ENCODE measurements at regions of chr1 and their contacts with region 1.

Region 1: GRCh38 chr1:150259758-150260669 is 2.4 kb downstream of the CA14 start:
- DNase-seq: peak in 3 of 5 donors; percentile 32 to 68 (median 43)
- ATAC-seq: peak; percentile 35 to 74 (median 54)
- H3K4me3 ChIP-seq: peak overlapping the region in 2 of 12 donors; percentile 15 to 16
- H3K27ac ChIP-seq: peak overlapping the region in 7 of 12 donors; percentile 2 to 77 (median 46)
- H3K4me1 ChIP-seq: peaks cover 0 to 38% (median 20%) of the 10 kb centered on the region in 12 donors
- H3K27me3 ChIP-seq: peaks cover 0 to 22% (median 0%) of the 10 kb centered on the region in 9 donors
- CTCF ChIP-seq: no peak
- POLR2A ChIP-seq: no peak

Region 2: DNA sequence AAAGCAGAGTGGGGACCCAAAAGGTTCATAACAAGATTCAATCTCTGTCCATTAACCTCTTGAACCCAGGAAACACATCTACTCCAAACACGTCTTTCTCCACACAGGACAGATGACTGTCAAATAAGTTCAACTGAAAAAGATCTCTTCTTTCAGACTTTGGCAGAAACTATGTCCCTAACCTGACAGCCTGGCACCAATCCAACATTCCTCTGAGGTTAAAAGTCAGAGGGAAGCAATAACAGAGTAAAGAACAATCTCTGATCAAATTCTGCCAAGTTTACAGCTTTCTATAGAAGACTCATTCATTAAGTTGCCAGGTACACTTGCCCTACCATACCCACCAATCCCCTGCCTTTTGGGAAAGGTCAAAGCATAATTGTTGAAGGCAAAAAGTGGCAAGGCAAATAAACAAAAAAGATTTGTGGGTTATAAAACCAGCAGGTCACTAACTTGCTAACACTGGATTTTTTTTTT is 281.4 kb before region 1 on chr1:
- intact Hi-C with region 1: no loop called
- DNase-seq: no peak
- ATAC-seq: no peak
- H3K4me3 ChIP-seq: no peak overlapping the region
- H3K27ac ChIP-seq: peak overlapping the region in 1 of 12 donors; percentile 14
- H3K4me1 ChIP-seq: peaks cover 0 to 23% (median 6%) of the 10 kb centered on the region in 12 donors
- H3K27me3 ChIP-seq: peaks cover 0 to 29% (median 0%) of the 10 kb centered on the region in 9 donors
- CTCF ChIP-seq: no peak
- POLR2A ChIP-seq: no peak

Region 3: GRCh38 chr1:150309770-150310508 is 49.9 kb after region 1 on chr1:
- intact Hi-C with region 1: no loop called
- DNase-seq: no peak
- ATAC-seq: peak in 1 of 4 donors; percentile 11
- H3K4me3 ChIP-seq: no peak overlapping the region
- H3K27ac ChIP-seq: no peak overlapping the region
- H3K4me1 ChIP-seq: no peaks in the 10 kb centered on the region
- H3K27me3 ChIP-seq: no peaks in the 10 kb centered on the region
- CTCF ChIP-seq: no peak
- POLR2A ChIP-seq: no peak

Region 4: GRCh38 chr1:150537732-150538684 is 278.0 kb after region 1 on chr1:
- intact Hi-C with region 1: loop called in 1 of 10 experiments (anchors 10 kb)
- DNase-seq: no peak
- ATAC-seq: peak in 1 of 4 donors; percentile 8
- H3K4me3 ChIP-seq: no peak overlapping the region
- H3K27ac ChIP-seq: no peak overlapping the region
- H3K4me1 ChIP-seq: peaks cover 0 to 36% (median 2%) of the 10 kb centered on the region in 12 donors
- H3K27me3 ChIP-seq: no peaks in the 10 kb centered on the region
- CTCF ChIP-seq: no peak
- POLR2A ChIP-seq: no peak

Region 5: GRCh38 chr1:150808121-150808520 is 548.1 kb after region 1 on chr1 and contains the start of gene CTSK:
- intact Hi-C with region 1: no loop called
- DNase-seq: peak in 1 of 5 donors; percentile 17
- ATAC-seq: peak in 3 of 4 donors; percentile 52 to 65 (median 64)
- H3K4me3 ChIP-seq: peak within 1 kb of the TSS in 9 of 12 donors; percentile 16 to 56 (median 34)
- H3K27ac ChIP-seq: peak within 1 kb of the TSS in 6 of 12 donors; percentile 10 to 54 (median 28)
- H3K4me1 ChIP-seq: peaks cover 0 to 23% (median 1%) of the 10 kb centered on the region in 12 donors
- H3K27me3 ChIP-seq: no peaks in the 10 kb centered on the region
- CTCF ChIP-seq: no peak
- POLR2A ChIP-seq: no peak
- total RNA-seq, gene CTSK: 2.1 to 17.9 (median 6.1) TPM